Right ventricle myocardium inferior (tissue), 1 donor: ENCODE measurements at regions of chr11 and their contacts with region 1.

Region 1: DNA sequence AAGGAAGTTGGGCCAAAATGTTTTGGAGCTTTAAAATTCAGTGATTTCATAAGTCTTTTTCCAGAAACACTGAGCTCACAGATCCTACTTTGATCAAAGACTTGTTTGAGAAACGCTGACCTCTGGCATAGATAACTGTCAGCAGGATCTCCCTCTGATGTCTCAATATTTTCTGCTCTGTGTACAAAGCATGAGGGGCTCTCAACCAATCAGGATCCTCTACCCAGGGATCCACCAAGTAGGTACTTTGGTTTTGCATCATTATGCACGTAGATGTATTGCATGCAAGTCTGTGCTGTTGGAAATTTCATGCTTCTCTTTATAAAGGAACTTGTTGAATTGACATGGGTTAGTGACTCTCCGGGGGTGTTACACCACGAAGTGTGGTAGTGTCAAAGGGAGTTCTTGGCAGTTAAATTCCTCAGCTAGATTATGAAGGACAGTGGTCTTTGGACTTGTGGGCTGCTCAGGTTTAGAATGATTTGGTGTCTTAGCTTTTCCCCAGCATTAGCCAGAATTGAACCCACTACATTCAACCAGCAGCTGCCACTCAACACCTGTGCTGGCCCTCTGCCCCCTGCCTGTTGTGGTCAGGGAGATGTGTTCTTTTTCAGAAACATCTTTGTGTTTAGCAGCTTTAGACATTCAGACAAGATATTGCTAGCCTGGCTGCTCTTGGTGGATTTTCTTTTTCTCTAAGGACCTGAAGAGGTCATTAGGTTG is 1.7 kb upstream of the DIXDC1 start:
- DNase-seq: no peak
- ATAC-seq: no peak

Region 2: GRCh38 chr11:111777094-111778046 is 158.1 kb before region 1 on chr11:
- intact Hi-C with region 1: no loop called
- DNase-seq: no peak
- ATAC-seq: peak; percentile 76

Region 3: DNA sequence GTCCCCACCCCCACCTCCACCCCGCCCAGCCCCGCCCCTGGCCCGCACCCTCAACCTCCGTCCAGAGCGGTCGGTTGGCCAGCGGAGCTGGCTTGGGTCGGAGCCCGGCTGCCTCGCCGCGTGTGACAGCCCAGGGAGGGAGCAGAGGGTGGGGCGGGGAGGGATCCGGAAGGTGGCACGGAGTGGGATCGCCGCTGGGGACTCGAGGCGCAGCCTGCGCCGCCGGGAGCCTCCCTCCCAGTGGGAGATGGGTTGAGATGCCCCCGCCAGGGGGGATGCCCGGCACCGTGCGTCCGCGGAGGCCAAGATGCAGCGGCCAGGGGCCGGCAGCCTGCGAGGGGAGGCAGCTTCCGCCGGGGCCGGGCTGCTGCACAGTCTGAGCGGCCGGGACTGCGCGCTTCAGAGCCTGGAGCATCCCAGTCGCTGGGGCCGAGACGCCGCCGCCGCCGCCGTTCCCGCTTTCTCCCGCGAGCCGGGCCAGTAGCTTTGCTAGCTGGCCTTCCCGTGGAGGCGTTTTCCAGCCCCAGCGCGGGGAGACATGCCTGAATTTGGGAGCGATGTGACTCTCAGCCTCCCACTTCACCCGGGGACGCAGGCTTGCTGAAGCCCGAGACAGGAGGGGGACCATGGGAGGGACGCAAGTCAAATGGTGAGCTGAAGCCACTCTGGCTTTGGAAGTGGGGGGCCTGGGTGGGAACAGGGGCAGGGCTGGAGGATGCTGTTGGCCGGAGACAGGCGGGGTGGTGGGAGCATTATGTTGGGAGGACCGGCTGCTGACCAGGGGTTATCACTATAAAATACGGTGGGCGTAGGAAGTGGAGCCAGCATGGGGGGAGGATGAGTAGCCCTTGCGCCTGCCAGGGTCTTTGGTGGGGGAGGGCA is 41.9 kb after region 1 on chr11:
- intact Hi-C with region 1: loop called (anchors 2 kb)
- DNase-seq: peak; percentile 79
- ATAC-seq: peak; percentile 81